ENCODE measurements at regions of chr22 and their contacts with region 1.

Region 1: GRCh38 chr22:23849009-23850006 is 8.4 kb upstream of the SLC2A11 start:
- DNase-seq: peak; percentile 70 to 93 (median 83)
- ATAC-seq: peak; percentile 98
- H3K4me3 ChIP-seq: no peak overlapping the region
- H3K4me3 Mint-ChIP-seq: no peak overlapping the region
- H3K27ac ChIP-seq: no peak overlapping the region
- H3K27ac Mint-ChIP-seq: no peak overlapping the region
- H3K4me1 ChIP-seq: peaks cover 3% of the 10 kb centered on the region
- H3K4me1 Mint-ChIP-seq: no peaks in the 10 kb centered on the region
- H3K27me3 ChIP-seq: no peaks in the 10 kb centered on the region
- H3K27me3 Mint-ChIP-seq: no peaks in the 10 kb centered on the region
- CTCF ChIP-seq: peak; percentile 96

Region 2: DNA sequence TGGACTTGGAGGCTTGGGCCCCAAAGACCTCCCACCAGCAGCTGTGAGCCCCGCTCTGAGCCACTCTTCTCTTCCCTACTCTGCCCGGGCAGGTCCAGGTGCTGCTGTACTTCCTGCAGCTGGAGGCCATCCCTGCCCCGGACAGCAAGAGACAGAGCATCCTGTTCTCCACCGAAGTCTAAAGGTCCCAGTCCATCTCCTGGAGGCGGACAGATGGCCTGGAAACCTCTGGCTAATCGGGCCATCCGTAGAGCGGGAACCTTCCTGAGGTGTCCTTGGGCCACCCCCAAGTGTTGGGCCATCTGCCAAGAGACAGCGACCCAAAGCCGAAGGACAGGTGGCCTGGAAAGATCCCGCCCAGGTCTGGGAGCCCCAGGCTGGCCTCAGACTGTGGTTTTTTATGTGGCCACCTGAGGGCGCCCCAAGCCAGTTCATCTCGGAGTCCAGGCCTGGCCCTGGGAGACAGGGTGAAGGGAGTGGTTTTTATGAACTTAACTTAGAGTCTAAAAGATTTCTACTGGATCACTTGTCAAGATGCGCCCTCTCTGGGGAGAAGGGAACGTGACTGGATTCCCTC is 533.9 kb before region 1 on chr22:
- CTCF ChIA-PET with region 1: interaction called, 3 read pairs
- POLR2A ChIA-PET with region 1: no interaction called
- intact Hi-C with region 1: loop called in 1 of 2 experiments (anchors 10 kb)
- DNase-seq: peak; percentile 8 to 74 (median 56)
- ATAC-seq: no peak
- H3K4me3 ChIP-seq: no peak overlapping the region
- H3K4me3 Mint-ChIP-seq: no peak overlapping the region
- H3K27ac ChIP-seq: no peak overlapping the region
- H3K27ac Mint-ChIP-seq: no peak overlapping the region
- H3K4me1 ChIP-seq: no peaks in the 10 kb centered on the region
- H3K4me1 Mint-ChIP-seq: peaks cover 7% of the 10 kb centered on the region
- H3K27me3 ChIP-seq: no peaks in the 10 kb centered on the region
- H3K27me3 Mint-ChIP-seq: no peaks in the 10 kb centered on the region
- CTCF ChIP-seq: peak; percentile 57

Region 3: DNA sequence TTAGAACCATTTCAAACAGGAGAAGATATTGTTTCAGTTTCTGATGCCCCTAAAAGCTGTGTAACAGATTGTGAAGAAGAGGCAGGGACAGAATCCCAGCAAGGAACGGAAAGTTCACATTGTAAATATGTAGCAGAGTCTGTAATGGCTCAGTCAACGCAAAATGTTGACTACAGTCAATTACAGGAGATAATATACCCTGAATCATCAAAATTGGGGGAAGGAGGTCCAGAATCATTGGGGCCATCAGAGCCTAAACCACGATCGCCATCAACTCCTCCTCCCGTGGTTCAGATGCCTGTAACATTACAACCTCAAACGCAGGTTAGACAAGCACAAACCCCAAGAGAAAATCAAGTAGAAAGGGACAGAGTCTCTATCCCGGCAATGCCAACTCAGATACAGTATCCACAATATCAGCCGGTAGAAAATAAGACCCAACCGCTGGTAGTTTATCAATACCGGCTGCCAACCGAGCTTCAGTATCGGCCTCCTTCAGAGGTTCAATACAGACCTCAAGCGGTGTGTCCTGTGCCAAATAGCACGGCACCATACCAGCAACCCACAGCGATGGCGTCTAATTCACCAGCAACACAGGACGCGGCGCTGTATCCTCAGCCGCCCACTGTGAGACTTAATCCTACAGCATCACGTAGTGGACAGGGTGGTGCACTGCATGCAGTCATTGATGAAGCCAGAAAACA is 310.0 kb before region 1 on chr22:
- CTCF ChIA-PET with region 1: interaction called, 8 read pairs
- POLR2A ChIA-PET with region 1: no interaction called
- intact Hi-C with region 1: loop called in 1 of 2 experiments (anchors 5 kb)
- DNase-seq: peak; percentile 53 to 86 (median 72)
- ATAC-seq: peak; percentile 100
- H3K4me3 ChIP-seq: no peak overlapping the region
- H3K4me3 Mint-ChIP-seq: peak overlapping the region; percentile 59
- H3K27ac ChIP-seq: no peak overlapping the region
- H3K27ac Mint-ChIP-seq: no peak overlapping the region
- H3K4me1 ChIP-seq: no peaks in the 10 kb centered on the region
- H3K4me1 Mint-ChIP-seq: peaks cover 8% of the 10 kb centered on the region
- H3K27me3 ChIP-seq: no peaks in the 10 kb centered on the region
- H3K27me3 Mint-ChIP-seq: peaks cover 2% of the 10 kb centered on the region
- CTCF ChIP-seq: peak; percentile 70

Region 4: DNA sequence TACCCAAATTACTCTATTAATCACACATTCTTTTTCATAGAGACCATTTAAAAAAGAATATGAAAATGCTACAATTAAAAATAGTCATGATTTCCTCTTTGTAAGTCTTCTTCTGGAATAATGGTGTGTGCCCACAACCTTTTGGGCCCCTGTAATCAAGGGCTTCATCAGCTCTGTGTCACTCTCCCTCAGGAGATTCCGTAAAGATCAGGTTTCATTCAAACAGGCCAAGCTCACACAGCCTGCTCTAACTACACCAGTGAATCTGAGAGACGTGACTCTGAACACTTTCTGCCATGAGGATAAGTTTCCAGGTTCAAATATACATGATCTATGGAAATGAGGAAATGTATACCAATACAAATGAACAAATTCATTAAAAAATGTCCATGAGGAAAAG is 226.7 kb before region 1 on chr22:
- CTCF ChIA-PET with region 1: interaction called, 19 read pairs
- POLR2A ChIA-PET with region 1: no interaction called
- intact Hi-C with region 1: loop called (anchors 5 kb)
- DNase-seq: no peak
- ATAC-seq: no peak
- H3K4me3 ChIP-seq: no peak overlapping the region
- H3K4me3 Mint-ChIP-seq: no peak overlapping the region
- H3K27ac ChIP-seq: no peak overlapping the region
- H3K27ac Mint-ChIP-seq: no peak overlapping the region
- H3K4me1 ChIP-seq: no peaks in the 10 kb centered on the region
- H3K4me1 Mint-ChIP-seq: peaks cover 2% of the 10 kb centered on the region
- H3K27me3 ChIP-seq: no peaks in the 10 kb centered on the region
- H3K27me3 Mint-ChIP-seq: no peaks in the 10 kb centered on the region
- CTCF ChIP-seq: no peak

Region 5: DNA sequence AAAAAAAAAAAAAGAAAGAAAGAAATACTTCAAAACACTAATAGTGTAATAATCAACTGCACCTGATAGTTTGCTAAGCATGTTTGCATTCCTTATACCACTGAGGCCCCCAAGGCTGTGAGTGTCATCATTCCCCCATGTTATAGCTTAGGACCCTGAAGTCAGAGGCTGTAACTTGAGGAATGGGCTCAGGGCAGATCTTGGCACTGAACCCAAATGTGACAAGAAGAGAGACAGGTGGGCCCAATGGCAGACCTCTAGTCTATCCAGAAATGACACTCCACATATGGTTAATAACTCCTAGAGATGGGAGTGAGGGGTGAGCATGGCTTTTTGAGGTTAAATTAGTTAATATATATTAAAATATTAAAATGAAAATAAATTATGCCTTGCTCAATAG is 111.6 kb before region 1 on chr22:
- CTCF ChIA-PET with region 1: interaction called, 24 read pairs
- POLR2A ChIA-PET with region 1: no interaction called
- intact Hi-C with region 1: no loop called
- DNase-seq: no peak
- ATAC-seq: no peak
- H3K4me3 ChIP-seq: no peak overlapping the region
- H3K4me3 Mint-ChIP-seq: no peak overlapping the region
- H3K27ac ChIP-seq: no peak overlapping the region
- H3K27ac Mint-ChIP-seq: no peak overlapping the region
- H3K4me1 ChIP-seq: no peaks in the 10 kb centered on the region
- H3K4me1 Mint-ChIP-seq: no peaks in the 10 kb centered on the region
- H3K27me3 ChIP-seq: no peaks in the 10 kb centered on the region
- H3K27me3 Mint-ChIP-seq: no peaks in the 10 kb centered on the region
- CTCF ChIP-seq: no peak

Region 6: DNA sequence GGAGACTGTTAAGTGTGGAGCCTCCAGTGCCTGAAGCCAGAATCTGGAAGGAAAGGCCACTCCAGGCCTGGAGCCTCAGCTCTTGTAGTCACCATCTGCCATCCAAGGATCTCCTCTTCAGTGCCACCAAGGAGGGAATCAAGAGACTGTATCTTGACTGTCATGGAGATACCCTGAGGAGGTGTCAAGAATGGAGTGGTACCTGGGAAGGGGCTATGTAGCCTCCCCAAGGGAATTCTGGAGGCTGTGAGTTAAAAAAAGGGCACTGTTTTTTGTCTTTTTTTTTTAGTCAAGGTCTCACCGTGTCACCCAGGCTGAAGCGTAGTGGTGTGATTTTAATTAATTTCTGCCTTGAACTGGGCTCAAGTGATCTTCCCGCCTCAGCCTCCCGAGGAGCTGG is 89.7 kb before region 1 on chr22:
- CTCF ChIA-PET with region 1: interaction called, 10 read pairs
- POLR2A ChIA-PET with region 1: no interaction called
- intact Hi-C with region 1: no loop called
- DNase-seq: no peak
- ATAC-seq: no peak
- H3K4me3 ChIP-seq: no peak overlapping the region
- H3K4me3 Mint-ChIP-seq: no peak overlapping the region
- H3K27ac ChIP-seq: no peak overlapping the region
- H3K27ac Mint-ChIP-seq: no peak overlapping the region
- H3K4me1 ChIP-seq: peaks cover 22% of the 10 kb centered on the region
- H3K4me1 Mint-ChIP-seq: peaks cover 25% of the 10 kb centered on the region
- H3K27me3 ChIP-seq: no peaks in the 10 kb centered on the region
- H3K27me3 Mint-ChIP-seq: no peaks in the 10 kb centered on the region
- CTCF ChIP-seq: no peak

Region 7: DNA sequence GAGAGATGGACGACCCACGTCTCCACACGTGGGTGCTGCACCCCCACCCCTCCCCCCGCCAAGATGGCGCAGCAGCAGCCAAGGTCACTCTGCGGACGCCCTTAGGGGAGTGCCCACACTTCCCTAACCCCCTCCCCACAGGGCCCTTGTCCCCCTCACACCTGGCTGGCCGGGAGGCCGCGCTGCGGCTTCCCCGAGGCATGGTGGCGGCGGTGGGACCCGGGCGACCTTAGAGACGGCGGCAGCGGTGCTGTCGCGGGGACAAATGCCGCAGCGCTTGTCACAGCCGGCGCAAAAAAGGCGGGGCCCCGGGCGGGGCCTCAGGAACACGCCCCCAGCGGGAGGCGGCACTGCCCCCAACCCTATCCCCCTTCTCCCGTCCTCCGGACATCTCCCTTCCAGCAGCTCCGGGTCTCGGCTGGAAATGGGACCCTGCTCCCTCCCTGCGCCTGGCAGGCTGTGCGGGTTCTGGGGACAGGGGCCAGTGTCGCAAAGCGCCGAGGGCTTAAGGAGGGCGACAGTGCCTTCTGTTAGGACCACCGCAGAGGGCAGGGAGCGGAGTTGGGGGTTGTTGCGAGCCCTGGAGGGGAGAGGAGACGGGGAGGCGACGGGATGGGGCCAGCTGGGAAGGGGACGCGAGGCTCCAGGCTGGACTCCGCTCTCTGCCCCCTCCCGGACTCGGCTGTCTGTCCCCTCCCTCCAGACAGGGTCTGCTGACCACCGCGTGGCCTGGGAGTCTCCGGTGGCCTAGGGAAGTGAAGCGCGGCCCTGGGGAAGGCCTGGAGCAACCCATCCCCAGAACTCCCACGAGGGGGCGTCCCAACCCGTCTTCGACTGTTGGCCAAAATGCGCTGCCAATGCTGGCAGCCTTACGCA is 81.4 kb before region 1 on chr22 and contains the start of gene CHCHD10:
- CTCF ChIA-PET with region 1: interaction called, 69 read pairs
- POLR2A ChIA-PET with region 1: no interaction called
- intact Hi-C with region 1: loop called in 1 of 2 experiments (anchors 5 kb)
- DNase-seq: peak; percentile 54 to 84 (median 77)
- ATAC-seq: peak; percentile 70
- H3K4me3 ChIP-seq: peak within 1 kb of the TSS; percentile 85 to 97
- H3K4me3 Mint-ChIP-seq: peak within 1 kb of the TSS; percentile 82
- H3K27ac ChIP-seq: peak within 1 kb of the TSS; percentile 58 to 72
- H3K27ac Mint-ChIP-seq: peak within 1 kb of the TSS; percentile 52
- H3K4me1 ChIP-seq: peaks cover 63% of the 10 kb centered on the region
- H3K4me1 Mint-ChIP-seq: peaks cover 42% of the 10 kb centered on the region
- H3K27me3 ChIP-seq: no peaks in the 10 kb centered on the region
- H3K27me3 Mint-ChIP-seq: no peaks in the 10 kb centered on the region
- CTCF ChIP-seq: peak; percentile 66
- total RNA-seq, gene CHCHD10: 40.7 to 52.4 TPM